ENCODE measurements at regions of chr9 and their contacts with region 1.

Region 1: GRCh38 chr9:135602789-135603481 is 36.4 kb downstream of the GLT6D1 start:
- DNase-seq: peak in 1 of 5 donors; percentile 24
- H3K4me3 ChIP-seq: no peak overlapping the region
- H3K27ac ChIP-seq: no peak overlapping the region
- H3K4me1 ChIP-seq: peaks cover 4% of the 10 kb centered on the region
- H3K27me3 ChIP-seq: no peaks in the 10 kb centered on the region
- CTCF ChIP-seq: peak in 2 of 3 donors; percentile 50 to 55
- EP300 ChIP-seq: no peak
- POLR2A ChIP-seq: no peak

Region 2: DNA sequence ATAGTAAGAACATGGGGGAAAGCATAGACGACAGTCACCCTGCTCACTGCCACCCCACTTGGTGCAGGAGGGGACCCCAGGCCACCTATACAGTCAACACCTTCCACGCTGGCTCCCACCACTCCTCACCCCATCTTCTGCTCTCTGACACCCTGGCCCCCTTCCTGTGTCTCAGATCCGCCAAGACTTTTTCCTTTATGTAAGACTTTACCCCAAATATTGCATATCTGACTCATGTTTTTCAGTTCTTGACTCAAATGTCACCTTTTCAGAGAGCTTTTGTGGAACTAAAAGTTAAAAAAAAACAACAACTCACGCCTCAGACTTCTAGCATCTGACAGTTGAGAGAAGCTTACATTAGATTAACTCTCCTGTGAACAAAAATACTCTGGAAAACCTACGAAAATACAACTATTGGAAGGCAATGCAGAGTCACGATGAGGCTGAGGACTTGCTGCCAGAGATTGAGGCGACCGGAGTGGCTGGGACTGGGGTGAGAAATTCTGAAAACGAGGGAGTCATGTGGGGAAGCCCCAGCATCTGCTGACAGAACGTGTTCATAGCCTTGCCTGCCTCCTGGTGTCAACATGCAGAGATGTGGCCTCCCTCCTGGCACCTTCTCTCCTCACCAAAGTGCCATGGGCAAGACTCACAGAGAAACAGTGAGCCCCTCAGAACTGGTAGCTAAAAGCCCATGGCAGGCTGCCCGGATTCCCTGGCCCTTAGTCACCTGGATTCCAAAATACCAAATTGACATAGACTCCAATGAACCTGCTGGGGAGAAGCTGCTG is 744.7 kb before region 1 on chr9:
- intact Hi-C with region 1: no loop called
- DNase-seq: peak; percentile 49 to 72 (median 58)
- H3K4me3 ChIP-seq: no peak overlapping the region
- H3K27ac ChIP-seq: peak overlapping the region in 1 of 2 donors; percentile 22
- H3K4me1 ChIP-seq: peaks cover 11% of the 10 kb centered on the region
- H3K27me3 ChIP-seq: no peaks in the 10 kb centered on the region
- CTCF ChIP-seq: no peak
- EP300 ChIP-seq: no peak
- POLR2A ChIP-seq: no peak

Region 3: DNA sequence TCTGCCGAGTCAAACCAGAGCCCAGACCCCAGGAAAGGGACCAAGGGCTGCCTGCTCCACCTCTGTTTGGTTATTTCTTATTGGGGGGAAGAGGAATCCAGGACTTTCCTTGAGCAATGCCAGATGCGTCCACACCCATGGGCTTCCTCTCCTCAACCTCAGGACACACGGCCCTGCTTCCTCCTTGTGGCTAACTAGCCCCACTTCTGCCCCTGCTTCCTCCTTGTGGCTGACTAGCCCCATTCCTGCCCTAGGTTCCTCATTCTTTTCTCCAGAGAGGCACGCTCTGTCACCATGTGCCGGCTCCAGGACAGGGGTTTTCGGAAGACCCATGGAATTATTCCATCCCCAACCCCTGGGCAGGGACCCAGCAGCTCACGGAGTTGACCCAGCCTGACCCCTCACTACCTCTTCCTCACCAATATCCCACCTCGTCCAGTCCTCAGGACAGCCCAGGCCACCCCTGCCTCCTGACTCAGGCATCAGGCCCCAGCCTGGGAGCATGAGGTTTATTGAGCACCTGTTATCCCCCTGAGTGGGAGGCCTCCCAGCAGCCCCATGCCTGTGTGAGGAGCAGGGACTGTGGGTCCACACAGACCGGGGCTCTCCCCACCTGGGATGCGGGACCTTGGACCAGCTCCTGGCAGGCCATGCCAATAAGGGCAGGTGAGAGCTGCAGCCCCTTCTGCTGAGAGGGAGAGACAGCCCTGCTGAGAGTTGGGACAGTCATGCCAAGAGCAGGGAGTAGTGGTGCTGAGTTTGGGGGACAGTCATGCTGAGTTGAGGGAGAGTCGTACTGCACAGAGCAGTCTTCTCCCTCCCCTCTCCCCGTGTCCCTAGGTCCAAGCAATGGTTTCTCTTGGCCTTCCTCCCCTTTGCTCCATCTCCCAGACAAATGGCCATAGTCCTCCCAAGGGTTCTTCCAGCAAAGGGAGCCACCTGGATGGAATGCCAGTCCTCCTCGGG is 673.5 kb before region 1 on chr9:
- intact Hi-C with region 1: no loop called
- DNase-seq: peak in 1 of 5 donors; percentile 21
- H3K4me3 ChIP-seq: no peak overlapping the region
- H3K27ac ChIP-seq: no peak overlapping the region
- H3K4me1 ChIP-seq: peaks cover 7% of the 10 kb centered on the region
- H3K27me3 ChIP-seq: no peaks in the 10 kb centered on the region
- CTCF ChIP-seq: no peak
- EP300 ChIP-seq: no peak
- POLR2A ChIP-seq: no peak

Region 4: GRCh38 chr9:135582966-135583687 is 19.8 kb before region 1 on chr9:
- intact Hi-C with region 1: loop called in 1 of 4 experiments (anchors 2 kb)
- DNase-seq: no peak
- H3K4me3 ChIP-seq: no peak overlapping the region
- H3K27ac ChIP-seq: no peak overlapping the region
- H3K4me1 ChIP-seq: no peaks in the 10 kb centered on the region
- H3K27me3 ChIP-seq: no peaks in the 10 kb centered on the region
- CTCF ChIP-seq: no peak
- EP300 ChIP-seq: no peak
- POLR2A ChIP-seq: no peak

Region 5: GRCh38 chr9:135701959-135702721 is 99.2 kb after region 1 on chr9 and contains the start of gene KCNT1:
- intact Hi-C with region 1: loop called in 2 of 4 experiments (anchors 5 to 10 kb)
- DNase-seq: peak; percentile 63 to 88 (median 75)
- H3K4me3 ChIP-seq: peak within 1 kb of the TSS; percentile 25
- H3K27ac ChIP-seq: peak within 1 kb of the TSS; percentile 9 to 47
- H3K4me1 ChIP-seq: peaks cover 14% of the 10 kb centered on the region
- H3K27me3 ChIP-seq: no peaks in the 10 kb centered on the region
- CTCF ChIP-seq: peak; percentile 80 to 98 (median 82)
- EP300 ChIP-seq: no peak
- POLR2A ChIP-seq: no peak
- total RNA-seq, gene KCNT1: 0.83 to 12.0 (median 6.4) TPM

Measured in ovary (tissue), 10 donors.